Heart right ventricle (tissue), 16 donors: ENCODE measurements at regions of chr1 and their contacts with region 1.

Region 1: DNA sequence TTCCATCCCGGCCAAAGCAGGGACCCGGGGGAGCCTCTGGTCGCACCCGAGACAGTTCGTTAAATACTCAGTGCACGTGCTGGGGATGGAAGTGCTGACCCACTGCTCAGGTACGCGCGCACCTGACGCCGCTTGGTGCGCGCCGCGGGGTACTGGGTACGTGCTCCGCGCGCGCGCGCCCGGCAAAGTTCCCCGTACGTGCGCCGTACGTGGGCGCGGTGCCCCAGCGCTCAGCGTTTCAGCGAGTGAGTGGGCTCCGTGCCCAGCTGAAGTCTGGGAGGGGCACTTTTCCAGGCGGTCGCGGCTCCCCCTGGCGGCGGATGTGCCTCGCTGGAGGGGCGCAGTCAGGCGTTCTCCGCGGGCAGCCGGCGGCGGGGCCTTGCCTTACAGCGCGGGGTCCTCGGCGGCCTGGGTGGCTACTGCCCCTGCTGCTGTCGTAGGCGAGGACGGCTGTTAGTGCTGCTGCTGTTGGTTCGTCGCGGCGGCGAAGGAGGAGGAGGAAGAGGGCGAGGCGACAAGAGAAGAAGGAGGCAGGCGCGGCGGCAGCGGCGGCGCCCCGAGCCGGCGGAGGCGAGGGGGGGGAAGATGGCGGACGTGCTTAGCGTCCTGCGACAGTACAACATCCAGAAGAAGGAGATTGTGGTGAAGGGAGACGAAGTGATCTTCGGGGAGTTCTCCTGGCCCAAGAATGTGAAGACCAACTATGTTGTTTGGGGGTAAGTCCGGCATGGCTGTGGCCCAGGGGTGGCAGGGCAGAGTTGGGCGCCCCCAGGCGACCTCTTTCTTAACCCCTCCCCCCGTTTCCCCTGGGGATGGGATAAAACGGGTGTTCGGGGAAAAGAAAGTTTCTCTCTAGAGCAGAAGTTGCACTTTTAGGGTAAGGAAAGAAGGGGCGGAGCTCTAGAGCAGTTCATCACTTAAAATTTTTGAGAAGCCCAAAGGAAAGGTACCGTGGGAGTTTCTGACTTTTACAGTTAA is at the start of gene CDC73:
- DNase-seq: peak; percentile 97 to 99
- ATAC-seq: peak; percentile 98 to 100 (median 99)
- H3K4me3 ChIP-seq: peak within 1 kb of the TSS; percentile 59 to 91 (median 72)
- H3K27ac ChIP-seq: peak within 1 kb of the TSS; percentile 89 to 98 (median 95)
- H3K4me1 ChIP-seq: peaks cover 10 to 41% (median 34%) of the 10 kb centered on the region in 9 donors
- H3K27me3 ChIP-seq: no peaks in the 10 kb centered on the region
- CTCF ChIP-seq: peak; percentile 72 to 98 (median 94)
- total RNA-seq, gene CDC73: 47.9 to 70.2 (median 57.0) TPM

Region 2: DNA sequence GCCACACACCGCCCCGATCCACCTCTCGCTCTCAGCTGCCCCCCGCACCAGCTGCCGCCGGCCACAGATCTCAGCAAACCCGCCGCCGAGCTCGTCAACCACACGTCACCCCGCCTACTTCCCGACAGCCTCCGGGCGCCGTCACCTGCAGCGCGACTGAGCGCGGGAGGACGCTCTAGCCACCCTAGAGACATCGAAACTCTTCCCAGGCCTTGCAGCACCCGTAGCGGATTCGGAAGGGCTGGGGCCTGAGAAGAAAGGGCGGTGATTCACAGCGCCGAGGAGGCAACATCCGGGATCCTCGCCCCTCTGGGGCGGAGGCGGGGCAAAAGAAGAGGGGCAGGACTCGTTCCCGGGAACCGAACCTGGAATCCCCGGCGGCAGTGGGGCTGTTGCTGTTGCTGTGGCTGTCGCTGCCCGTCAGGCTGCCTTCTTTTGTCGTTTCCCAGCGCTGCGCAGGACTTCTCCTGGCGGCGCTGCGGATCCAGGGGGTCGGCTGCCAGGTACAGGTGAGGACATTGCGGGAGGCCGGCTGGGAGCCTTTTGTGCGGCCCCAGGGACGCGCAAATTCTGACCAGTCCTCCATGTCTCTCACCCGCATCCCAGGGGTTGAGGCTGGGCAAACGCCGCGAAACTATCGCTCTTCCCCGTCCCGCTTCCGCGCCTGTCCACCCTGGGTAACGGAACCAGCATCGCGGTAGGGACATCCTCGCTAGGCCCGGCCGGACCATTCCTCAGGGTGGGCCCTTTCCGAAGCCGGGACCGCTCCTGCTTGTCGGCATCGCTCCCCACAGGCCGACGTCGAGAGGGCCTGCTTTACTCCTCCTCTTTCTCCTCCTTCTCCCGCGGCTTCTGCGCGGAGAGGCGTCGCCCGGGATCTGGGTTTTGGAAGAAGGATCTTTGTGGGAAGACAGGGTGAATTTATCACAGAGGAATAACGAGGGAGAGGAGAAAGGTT is 62.4 kb before region 1 on chr1 and contains the starts of genes RO60 and UCHL5:
- intact Hi-C with region 1: loop called in 5 of 10 experiments (anchors 1 to 5 kb)
- DNase-seq: peak; percentile 94 to 97
- ATAC-seq: peak; percentile 97 to 99 (median 98)
- H3K4me3 ChIP-seq: peak within 1 kb of the TSS; percentile 69 to 96 (median 82)
- H3K27ac ChIP-seq: peak within 1 kb of the TSS; percentile 94 to 99 (median 96)
- H3K4me1 ChIP-seq: peaks cover 0 to 67% (median 47%) of the 10 kb centered on the region in 9 donors
- H3K27me3 ChIP-seq: no peaks in the 10 kb centered on the region
- CTCF ChIP-seq: peak in 2 of 9 donors; percentile 17 to 33
- total RNA-seq, gene RO60: 43.6 to 62.9 (median 55.9) TPM
- total RNA-seq, gene UCHL5: 25.7 to 45.2 (median 35.9) TPM

Region 3: GRCh38 chr1:193077991-193078390 is 43.9 kb before region 1 on chr1:
- intact Hi-C with region 1: no loop called
- DNase-seq: no peak
- ATAC-seq: no peak
- H3K4me3 ChIP-seq: no peak overlapping the region
- H3K27ac ChIP-seq: no peak overlapping the region
- H3K4me1 ChIP-seq: no peaks in the 10 kb centered on the region
- H3K27me3 ChIP-seq: no peaks in the 10 kb centered on the region
- CTCF ChIP-seq: no peak

Region 4: GRCh38 chr1:193156826-193157142 is 34.9 kb after region 1 on chr1:
- intact Hi-C with region 1: no loop called
- DNase-seq: no peak
- ATAC-seq: no peak
- H3K4me3 ChIP-seq: no peak overlapping the region
- H3K27ac ChIP-seq: no peak overlapping the region
- H3K4me1 ChIP-seq: peaks cover 0 to 5% (median 0%) of the 10 kb centered on the region in 9 donors
- H3K27me3 ChIP-seq: no peaks in the 10 kb centered on the region
- CTCF ChIP-seq: no peak